Panc1 (cell line): ENCODE measurements at regions of chr6 and their contacts with region 1.

Region 1: DNA sequence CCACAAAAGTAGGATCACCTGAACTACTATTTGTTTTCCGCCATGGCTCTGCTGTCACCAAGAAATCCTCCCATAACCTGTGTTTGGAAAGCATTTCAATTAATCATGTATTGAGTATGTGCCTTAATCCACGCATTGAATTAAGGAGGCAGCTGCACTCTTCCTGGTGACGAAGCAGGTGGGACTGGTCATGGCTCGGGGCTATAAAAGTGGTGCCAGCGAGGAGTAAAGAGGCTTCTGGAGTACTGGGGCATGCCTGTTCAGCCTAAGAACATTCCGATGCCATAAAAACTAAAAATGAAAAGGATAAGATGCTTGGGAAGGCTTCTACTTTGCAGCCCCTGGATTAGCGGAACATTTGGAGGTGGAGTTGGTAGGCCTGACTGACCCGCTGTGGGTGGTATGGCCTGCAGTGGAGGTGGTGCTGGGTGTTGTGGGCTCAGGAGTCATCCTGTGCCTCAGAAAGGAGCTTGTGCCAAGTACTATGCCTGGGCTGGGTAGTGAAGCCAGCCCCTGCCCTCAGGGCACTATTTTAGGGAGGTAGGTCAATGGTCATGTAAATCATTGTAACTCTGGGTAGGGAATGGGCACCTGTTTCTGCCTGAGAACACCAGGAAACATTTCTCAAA is 110.5 kb downstream of the B3GAT2 start:
- DNase-seq: no peak
- ATAC-seq: no peak
- H3K4me3 ChIP-seq: no peak overlapping the region
- H3K27ac ChIP-seq: no peak overlapping the region
- H3K4me1 ChIP-seq: no peaks in the 10 kb centered on the region
- H3K27me3 ChIP-seq: no peaks in the 10 kb centered on the region
- CTCF ChIP-seq: no peak

Region 2: GRCh38 chr6:70739534-70739933 is 106.8 kb before region 1 on chr6:
- CTCF ChIA-PET with region 1: no interaction called
- POLR2A ChIA-PET with region 1: no interaction called
- in situ Hi-C with region 1: no loop called
- intact Hi-C with region 1: no loop called
- DNase-seq: no peak
- ATAC-seq: no peak
- H3K4me3 ChIP-seq: no peak overlapping the region
- H3K27ac ChIP-seq: no peak overlapping the region
- H3K4me1 ChIP-seq: no peaks in the 10 kb centered on the region
- H3K27me3 ChIP-seq: no peaks in the 10 kb centered on the region
- CTCF ChIP-seq: no peak

Region 3: GRCh38 chr6:70753870-70754380 is 92.4 kb before region 1 on chr6:
- CTCF ChIA-PET with region 1: interaction called, 10 read pairs
- POLR2A ChIA-PET with region 1: no interaction called
- in situ Hi-C with region 1: no loop called
- intact Hi-C with region 1: no loop called
- DNase-seq: no peak
- ATAC-seq: no peak
- H3K4me3 ChIP-seq: no peak overlapping the region
- H3K27ac ChIP-seq: no peak overlapping the region
- H3K4me1 ChIP-seq: no peaks in the 10 kb centered on the region
- H3K27me3 ChIP-seq: no peaks in the 10 kb centered on the region
- CTCF ChIP-seq: no peak

Region 4: GRCh38 chr6:70823651-70824050 is 22.7 kb before region 1 on chr6:
- CTCF ChIA-PET with region 1: no interaction called
- POLR2A ChIA-PET with region 1: interaction called, 13 read pairs
- in situ Hi-C with region 1: no loop called
- intact Hi-C with region 1: no loop called
- DNase-seq: no peak
- ATAC-seq: no peak
- H3K4me3 ChIP-seq: no peak overlapping the region
- H3K27ac ChIP-seq: no peak overlapping the region
- H3K4me1 ChIP-seq: no peaks in the 10 kb centered on the region
- H3K27me3 ChIP-seq: no peaks in the 10 kb centered on the region
- CTCF ChIP-seq: no peak

Region 5: DNA sequence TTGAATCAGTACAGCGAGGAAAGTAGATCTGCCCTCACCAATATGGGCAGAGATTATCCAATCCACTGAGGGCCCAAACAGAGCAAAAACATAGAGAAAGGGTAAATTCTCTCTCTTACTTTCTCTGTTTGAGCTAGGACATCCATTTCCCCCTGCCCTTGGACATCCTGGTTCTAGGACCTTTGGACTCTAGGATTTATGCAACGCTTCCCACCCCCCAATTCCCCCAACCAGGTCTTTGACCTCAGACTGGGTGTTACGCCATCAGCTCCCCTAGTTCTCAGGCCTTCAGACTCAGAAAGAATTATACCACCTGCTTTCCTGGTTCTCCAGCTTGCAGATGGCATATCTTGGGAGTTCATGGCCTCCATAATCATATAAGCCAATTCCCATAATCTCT is 120.7 kb after region 1 on chr6:
- CTCF ChIA-PET with region 1: no interaction called
- POLR2A ChIA-PET with region 1: no interaction called
- in situ Hi-C with region 1: no loop called
- intact Hi-C with region 1: no loop called
- DNase-seq: no peak
- ATAC-seq: no peak
- H3K4me3 ChIP-seq: no peak overlapping the region
- H3K27ac ChIP-seq: no peak overlapping the region
- H3K4me1 ChIP-seq: no peaks in the 10 kb centered on the region
- H3K27me3 ChIP-seq: no peaks in the 10 kb centered on the region; the same call in 1 of the 2 replicates
- CTCF ChIP-seq: no peak

Region 6: DNA sequence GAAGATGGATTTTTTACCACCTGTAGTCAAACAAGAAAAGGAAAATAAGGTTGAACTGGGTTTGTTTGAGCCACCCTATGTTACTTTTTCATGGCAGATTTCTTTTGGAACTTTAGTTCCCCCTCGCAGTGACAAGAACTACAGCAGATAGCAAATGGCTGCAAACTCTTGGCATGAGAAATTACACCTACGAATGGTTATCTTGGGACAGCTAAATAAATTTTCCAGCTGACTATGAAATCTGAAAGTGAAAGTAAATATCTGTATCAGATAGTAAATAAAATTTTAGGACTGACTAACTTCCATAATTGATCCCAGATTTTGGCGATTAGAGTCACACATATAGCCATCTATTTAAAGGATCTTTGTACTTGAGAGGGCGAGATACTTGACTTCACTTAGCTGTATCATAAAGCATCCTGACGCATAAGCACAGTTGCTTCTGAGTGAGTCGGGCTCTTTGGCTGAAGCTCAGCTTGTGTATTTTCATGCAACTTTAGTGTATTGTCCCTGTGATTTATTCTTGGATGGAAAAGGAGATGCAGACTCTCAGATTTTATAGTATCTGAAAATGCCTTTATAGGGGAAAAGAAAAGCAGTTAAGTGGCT is 235.8 kb after region 1 on chr6:
- CTCF ChIA-PET with region 1: no interaction called
- POLR2A ChIA-PET with region 1: no interaction called
- in situ Hi-C with region 1: no loop called
- intact Hi-C with region 1: no loop called
- DNase-seq: no peak
- ATAC-seq: no peak
- H3K4me3 ChIP-seq: peak overlapping the region; percentile 2 to 3; a peak in 2 of 4 replicates
- H3K27ac ChIP-seq: no peak overlapping the region
- H3K4me1 ChIP-seq: no peaks in the 10 kb centered on the region
- H3K27me3 ChIP-seq: no peaks in the 10 kb centered on the region
- CTCF ChIP-seq: no peak